ENCODE measurements at regions of chr19 and their contacts with region 1.

Region 1: GRCh38 chr19:52269338-52270261 is at the start of gene ZNF766:
- DNase-seq: peak; percentile 98
- H3K4me3 ChIP-seq: peak within 1 kb of the TSS; percentile 40 to 94 (median 81)
- H3K27ac ChIP-seq: peak within 1 kb of the TSS; percentile 94 to 99 (median 96)
- H3K4me1 ChIP-seq: peaks cover 6 to 16% (median 12%) of the 10 kb centered on the region in 4 donors
- H3K27me3 ChIP-seq: no peaks in the 10 kb centered on the region
- CTCF ChIP-seq: peak in 2 of 5 experiments; percentile 13 to 14
- EP300 ChIP-seq: no peak
- POLR2A ChIP-seq: peak; percentile 86
- total RNA-seq, gene ZNF766: 1.1 to 34.2 (median 6.8) TPM

Region 2: DNA sequence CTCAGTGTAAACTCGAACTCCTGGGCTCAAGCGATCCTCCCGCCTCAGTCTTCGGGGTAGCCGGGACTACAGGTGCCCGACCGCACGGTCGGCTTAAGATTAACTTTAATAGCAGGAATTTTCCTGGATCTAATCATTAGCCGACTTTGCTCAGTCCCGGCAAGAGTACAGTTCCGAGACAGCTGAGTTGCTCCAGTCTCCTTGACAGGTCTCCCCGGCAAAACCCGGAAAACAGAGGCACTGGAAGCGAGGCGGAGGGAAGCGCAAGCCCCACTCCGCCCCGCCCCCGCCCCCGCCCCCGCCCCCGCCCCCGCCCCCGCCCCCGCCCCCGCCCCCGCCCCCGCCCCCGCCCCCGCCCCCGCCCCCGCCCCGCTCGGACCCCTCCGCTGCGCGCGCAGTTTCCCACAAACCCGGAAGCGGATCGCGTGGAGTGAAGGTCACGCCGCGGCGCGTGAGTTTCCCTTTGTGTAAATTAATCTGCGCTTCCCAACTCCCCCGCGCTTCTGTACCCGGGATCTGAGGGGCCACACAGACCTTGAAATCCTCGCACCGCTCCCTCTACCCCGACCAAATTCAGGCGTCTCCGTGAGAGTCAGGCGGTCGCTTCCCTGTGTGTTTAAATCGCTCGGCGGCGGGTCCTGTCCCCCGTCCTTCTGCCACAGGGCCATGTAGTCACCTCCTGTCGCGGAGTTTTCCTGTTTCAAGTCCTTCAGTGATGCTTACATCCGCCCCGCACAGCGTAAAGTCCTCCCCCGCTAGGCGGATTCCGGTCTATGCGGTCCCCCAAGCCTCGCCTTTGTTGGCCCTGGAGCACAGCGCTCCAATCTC is 27.4 kb after region 1 on chr19 and contains the start of gene ZNF480:
- in situ Hi-C with region 1: no loop called
- intact Hi-C with region 1: loop called (anchors 1 kb)
- DNase-seq: peak; percentile 89
- H3K4me3 ChIP-seq: peak within 1 kb of the TSS; percentile 76 to 94 (median 86)
- H3K27ac ChIP-seq: peak within 1 kb of the TSS; percentile 92 to 97 (median 96)
- H3K4me1 ChIP-seq: peaks cover 0 to 17% (median 10%) of the 10 kb centered on the region in 4 donors
- H3K27me3 ChIP-seq: no peaks in the 10 kb centered on the region
- CTCF ChIP-seq: peak in 2 of 5 experiments; percentile 8 to 36
- EP300 ChIP-seq: no peak
- POLR2A ChIP-seq: peak; percentile 75
- total RNA-seq, gene ZNF480: 9.4 to 20.1 (median 10.7) TPM

Region 3: GRCh38 chr19:52535771-52536447 is 266.3 kb after region 1 on chr19:
- in situ Hi-C with region 1: no loop called
- intact Hi-C with region 1: no loop called
- DNase-seq: peak; percentile 82
- H3K4me3 ChIP-seq: peak overlapping the region; percentile 21 to 61 (median 39)
- H3K27ac ChIP-seq: peak overlapping the region; percentile 64 to 86 (median 75)
- H3K4me1 ChIP-seq: peaks cover 0 to 9% (median 3%) of the 10 kb centered on the region in 4 donors
- H3K27me3 ChIP-seq: no peaks in the 10 kb centered on the region
- CTCF ChIP-seq: peak in 2 of 5 experiments; percentile 17 to 24
- EP300 ChIP-seq: no peak
- POLR2A ChIP-seq: peak; percentile 28

Region 4: DNA sequence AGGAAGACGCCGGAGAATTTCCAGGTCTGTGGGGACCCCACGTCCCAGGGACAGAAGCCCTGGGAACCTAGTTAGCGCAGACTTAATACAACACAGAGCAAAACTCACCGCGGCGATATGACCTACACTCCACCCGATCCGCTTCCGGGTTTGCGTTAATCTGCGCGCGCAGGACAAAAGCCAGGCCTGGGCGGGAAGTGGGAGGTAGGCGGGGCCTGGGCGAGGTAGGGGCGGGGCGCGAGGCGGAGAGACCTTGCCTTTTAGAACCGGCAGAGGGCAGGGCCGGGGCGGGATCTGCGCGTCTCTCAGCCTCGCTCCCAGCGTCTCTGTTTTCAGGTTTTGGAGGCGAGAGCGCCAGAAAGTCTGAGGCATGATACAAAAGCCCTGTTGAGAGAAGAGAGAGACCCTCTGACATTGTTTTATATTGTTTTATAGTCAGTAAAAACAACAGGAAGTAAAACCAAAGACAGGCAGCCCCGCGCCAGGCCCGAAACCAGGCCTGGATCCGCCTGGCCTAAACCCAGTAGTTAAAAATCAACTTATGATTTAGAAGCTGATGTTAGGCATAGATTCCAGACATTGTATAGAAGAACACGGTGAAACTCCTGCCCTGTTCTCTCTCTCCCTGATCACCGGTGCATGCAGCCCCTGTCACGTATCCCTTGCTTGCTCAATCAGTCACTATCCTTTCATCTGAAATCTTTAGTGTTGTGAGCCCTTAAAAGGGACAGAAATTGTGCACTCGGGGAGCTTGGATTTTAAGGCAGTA is 465.5 kb after region 1 on chr19 and contains the start of gene ZNF611:
- in situ Hi-C with region 1: loop called in 2 of 4 experiments (anchors 25 kb)
- intact Hi-C with region 1: no loop called
- DNase-seq: peak; percentile 100
- H3K4me3 ChIP-seq: peak within 1 kb of the TSS; percentile 70 to 97 (median 90)
- H3K27ac ChIP-seq: peak within 1 kb of the TSS; percentile 88 to 96 (median 94)
- H3K4me1 ChIP-seq: peaks cover 0 to 23% (median 10%) of the 10 kb centered on the region in 4 donors
- H3K27me3 ChIP-seq: no peaks in the 10 kb centered on the region
- CTCF ChIP-seq: peak; percentile 54 to 90 (median 70)
- EP300 ChIP-seq: no peak
- POLR2A ChIP-seq: peak; percentile 93
- total RNA-seq, gene ZNF611: 8.2 to 45.0 (median 15.0) TPM